K562 (cell line): ENCODE measurements at regions of chr1 and their contacts with region 1.

Region 1: GRCh38 chr1:26126321-26127084 is 14.9 kb downstream of the PDIK1L start:
- DNase-seq: peak; percentile 81 to 97 (median 89)
- ATAC-seq: peak; percentile 84
- H3K4me3 ChIP-seq: peak overlapping the region; percentile 24
- H3K27ac ChIP-seq: peak overlapping the region; percentile 99
- H3K4me1 ChIP-seq: peaks cover 34 to 78% of the 10 kb centered on the region in 2 experiments
- H3K27me3 ChIP-seq: no peaks in the 10 kb centered on the region
- CTCF ChIP-seq: no peak
- EP300 ChIP-seq: peak; percentile 100
- POLR2A ChIP-seq: peak; percentile 83
- RAD21 ChIP-seq: peak in 1 of 2 experiments; percentile 7; a peak in 2 of 4 replicates

Region 2: GRCh38 chr1:26111530-26112406 is 14.7 kb before region 1 on chr1 and contains the start of gene PDIK1L:
- CTCF ChIA-PET with region 1: no interaction called
- POLR2A ChIA-PET with region 1: interaction called, 107 read pairs
- in situ Hi-C with region 1: no loop called
- intact Hi-C with region 1: loop called (anchors 1 kb)
- DNase-seq: peak; percentile 90 to 98 (median 94)
- ATAC-seq: peak; percentile 85
- H3K4me3 ChIP-seq: peak within 1 kb of the TSS; percentile 94
- H3K27ac ChIP-seq: peak within 1 kb of the TSS; percentile 92
- H3K4me1 ChIP-seq: peaks cover 13 to 29% of the 10 kb centered on the region in 2 experiments
- H3K27me3 ChIP-seq: no peaks in the 10 kb centered on the region
- CTCF ChIP-seq: 0 out of 6 replicates have a peak, but pooled peaks of 2 of the 3 experiments have one; percentile 4 to 10
- EP300 ChIP-seq: no peak; the same call in 1 of the 2 replicates
- POLR2A ChIP-seq: peak; percentile 84
- RAD21 ChIP-seq: peak in 1 of 2 experiments; percentile 14; a peak in 1 of 4 replicates
- polyA plus RNA-seq, gene PDIK1L: 14.7 to 21.5 TPM

Region 3: DNA sequence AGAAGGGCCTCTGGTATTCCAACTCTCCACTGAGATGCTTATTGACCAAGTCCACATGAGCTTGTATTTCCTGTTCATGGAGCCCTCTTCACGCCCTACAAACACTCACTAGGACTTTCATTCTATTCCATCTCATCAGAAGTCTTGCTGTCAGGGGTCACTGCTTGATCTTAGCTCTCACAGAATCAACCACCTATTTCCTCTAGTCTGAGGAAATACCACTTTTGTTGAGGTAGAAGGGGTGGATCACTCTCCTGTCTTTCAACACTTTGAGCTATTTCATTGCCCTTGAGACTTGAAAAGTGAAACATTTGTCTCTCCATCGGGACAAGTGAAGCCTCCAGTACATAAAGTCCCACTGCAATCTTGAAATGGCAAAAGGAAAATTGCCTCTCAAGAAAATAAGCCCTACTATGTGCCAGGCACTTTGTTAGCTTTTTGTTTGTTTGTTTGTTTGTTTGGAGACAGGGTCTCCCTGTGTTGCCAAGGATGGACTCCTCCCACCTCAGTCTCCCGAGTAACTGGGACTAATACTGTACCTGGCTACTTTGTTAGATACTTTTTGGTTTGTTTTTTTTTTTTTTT is 12.6 kb after region 1 on chr1:
- CTCF ChIA-PET with region 1: interaction called, 3 read pairs
- POLR2A ChIA-PET with region 1: interaction called, 237 read pairs
- in situ Hi-C with region 1: no loop called
- intact Hi-C with region 1: loop called (anchors 2 kb)
- DNase-seq: peak in 3 of 4 experiments; percentile 46 to 67 (median 55)
- ATAC-seq: peak; percentile 80
- H3K4me3 ChIP-seq: no peak overlapping the region
- H3K27ac ChIP-seq: peak overlapping the region; percentile 74
- H3K4me1 ChIP-seq: peaks cover 14 to 23% of the 10 kb centered on the region in 2 experiments; a peak in 4 of 5 replicates
- H3K27me3 ChIP-seq: no peaks in the 10 kb centered on the region
- CTCF ChIP-seq: no peak
- EP300 ChIP-seq: no peak
- POLR2A ChIP-seq: no peak
- RAD21 ChIP-seq: no peak

Region 4: GRCh38 chr1:26161415-26162219 is 35.1 kb after region 1 on chr1:
- CTCF ChIA-PET with region 1: interaction called, 3 read pairs
- POLR2A ChIA-PET with region 1: interaction called, 12 read pairs
- in situ Hi-C with region 1: no loop called
- intact Hi-C with region 1: no loop called
- DNase-seq: peak; percentile 89 to 95 (median 92)
- ATAC-seq: peak; percentile 86
- H3K4me3 ChIP-seq: peak overlapping the region; percentile 43
- H3K27ac ChIP-seq: peak overlapping the region; percentile 80
- H3K4me1 ChIP-seq: peaks cover 29 to 58% of the 10 kb centered on the region in 2 experiments
- H3K27me3 ChIP-seq: no peaks in the 10 kb centered on the region
- CTCF ChIP-seq: peak; percentile 27 to 73 (median 63); a peak in 4 of 6 replicates
- EP300 ChIP-seq: peak; percentile 4; the same call in 1 of the 2 replicates
- POLR2A ChIP-seq: peak; percentile 81
- RAD21 ChIP-seq: peak; percentile 60 to 84

Region 5: GRCh38 chr1:26351591-26352337 is 225.3 kb after region 1 on chr1:
- CTCF ChIA-PET with region 1: no interaction called
- POLR2A ChIA-PET with region 1: no interaction called
- in situ Hi-C with region 1: no loop called
- intact Hi-C with region 1: no loop called
- DNase-seq: peak in 3 of 4 experiments; percentile 46 to 59 (median 54)
- ATAC-seq: peak; percentile 21
- H3K4me3 ChIP-seq: no peak overlapping the region
- H3K27ac ChIP-seq: peak overlapping the region; percentile 38; the same call in 1 of the 3 replicates
- H3K4me1 ChIP-seq: peaks cover 23 to 31% of the 10 kb centered on the region in 2 experiments
- H3K27me3 ChIP-seq: no peaks in the 10 kb centered on the region
- CTCF ChIP-seq: no peak
- EP300 ChIP-seq: no peak
- POLR2A ChIP-seq: no peak
- RAD21 ChIP-seq: no peak